Left ventricle myocardium superior (tissue), 1 donor: ENCODE measurements at regions of chr2 and their contacts with region 1.

Region 1: GRCh38 chr2:105576440-105577252 is 168.1 kb upstream of the NCK2 start:
- DNase-seq: no peak
- ATAC-seq: peak; percentile 70

Region 2: GRCh38 chr2:105734762-105735538 is 158.3 kb after region 1 on chr2:
- intact Hi-C with region 1: no loop called
- DNase-seq: no peak
- ATAC-seq: peak; percentile 59

Region 3: DNA sequence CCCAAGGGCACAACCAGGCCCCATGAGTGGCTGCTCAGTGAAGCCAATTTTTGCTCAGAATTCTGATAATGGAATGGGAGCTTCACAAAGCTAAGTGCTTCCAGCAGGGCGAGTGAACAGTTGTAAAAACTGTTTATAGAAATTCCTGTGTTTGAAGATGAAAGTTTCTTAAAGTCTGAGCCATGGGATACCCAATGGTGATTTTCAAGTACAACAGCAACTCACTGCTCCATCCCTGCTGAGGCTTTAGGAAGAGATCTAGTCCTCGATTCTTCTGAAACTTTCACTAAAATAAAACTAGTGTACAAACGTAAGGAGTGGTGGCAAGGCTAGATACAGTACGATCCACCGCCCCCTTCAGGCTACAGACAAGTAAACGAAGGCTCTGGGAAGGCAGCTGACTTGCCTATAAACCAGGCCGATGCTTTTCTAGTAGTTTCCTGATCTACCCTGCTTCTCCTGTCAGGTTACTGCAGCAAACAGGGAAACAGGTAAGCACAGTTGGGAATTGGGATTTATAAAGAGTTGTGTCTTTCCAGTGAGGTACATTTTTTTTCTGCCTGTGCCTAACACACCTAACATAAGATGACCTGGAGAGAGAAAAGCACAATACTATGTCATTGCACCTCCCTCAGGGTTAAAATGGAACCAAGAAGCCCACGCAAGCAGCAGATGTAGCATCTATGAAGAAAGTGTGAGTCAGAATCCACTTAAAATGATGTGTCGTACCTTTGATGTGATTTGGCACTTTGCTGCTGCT is 508.7 kb after region 1 on chr2:
- intact Hi-C with region 1: loop called (anchors 10 kb)
- DNase-seq: no peak
- ATAC-seq: peak; percentile 75